AG04449 (cell line): ENCODE measurements at regions of chr4 and their contacts with region 1.

Region 1: GRCh38 chr4:25439918-25440477 is 62.9 kb downstream of the ANAPC4 start:
- DNase-seq: peak; percentile 14
- H3K4me3 ChIP-seq: no peak overlapping the region
- CTCF ChIP-seq: peak; percentile 82

Region 2: GRCh38 chr4:25420931-25421330 is 19.1 kb before region 1 on chr4:
- CTCF ChIA-PET with region 1: interaction called, 37 read pairs
- POLR2A ChIA-PET with region 1: no interaction called
- DNase-seq: no peak
- H3K4me3 ChIP-seq: no peak overlapping the region
- CTCF ChIP-seq: no peak

Region 3: DNA sequence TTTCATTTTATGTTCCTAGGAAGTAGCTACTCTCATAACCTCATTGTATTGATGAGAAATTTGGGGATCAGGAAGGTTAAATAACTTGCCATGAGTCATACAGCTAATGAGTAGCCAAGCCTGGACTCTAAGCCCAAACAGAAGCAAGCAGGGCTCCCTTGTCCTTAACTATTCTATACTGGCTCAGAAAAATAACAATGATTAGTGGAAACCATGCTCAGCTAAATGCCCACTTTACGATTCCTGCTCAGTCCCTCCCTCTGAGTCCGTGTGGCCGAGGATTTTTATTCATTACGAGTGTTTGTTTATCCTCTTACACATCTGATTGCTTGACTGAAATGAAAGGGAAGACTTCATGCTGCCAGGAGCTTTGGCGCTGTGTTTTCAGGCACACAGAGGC is 316.5 kb after region 1 on chr4:
- CTCF ChIA-PET with region 1: interaction called, 464 read pairs
- POLR2A ChIA-PET with region 1: no interaction called
- DNase-seq: no peak
- H3K4me3 ChIP-seq: no peak overlapping the region
- CTCF ChIP-seq: no peak

Region 4: GRCh38 chr4:25779016-25779415 is 339.0 kb after region 1 on chr4:
- CTCF ChIA-PET with region 1: interaction called, 464 read pairs
- POLR2A ChIA-PET with region 1: no interaction called
- DNase-seq: no peak
- H3K4me3 ChIP-seq: no peak overlapping the region
- CTCF ChIP-seq: no peak

Region 5: DNA sequence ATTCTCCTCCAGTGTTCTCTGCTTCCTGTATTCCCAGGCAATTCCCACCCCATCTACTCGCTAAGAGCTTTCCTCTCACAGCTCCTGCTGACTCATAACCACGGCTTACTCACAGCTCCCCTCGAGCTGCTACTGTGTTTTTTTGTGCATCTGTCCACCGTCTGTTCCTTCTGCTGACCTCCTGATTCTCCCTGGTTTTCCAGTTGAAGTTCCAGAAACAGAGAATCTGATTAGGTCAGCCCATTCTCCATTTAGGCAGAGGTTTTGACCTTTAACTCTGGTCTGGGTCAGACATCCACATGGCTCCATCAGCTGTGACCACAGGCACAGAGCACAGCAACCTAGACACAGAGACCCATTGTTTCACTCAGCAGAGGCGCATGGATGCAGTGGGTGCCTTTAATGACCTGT is 468.5 kb after region 1 on chr4:
- CTCF ChIA-PET with region 1: interaction called, 28 read pairs
- POLR2A ChIA-PET with region 1: no interaction called
- DNase-seq: peak; percentile 87
- H3K4me3 ChIP-seq: no peak overlapping the region
- CTCF ChIP-seq: no peak

Region 6: DNA sequence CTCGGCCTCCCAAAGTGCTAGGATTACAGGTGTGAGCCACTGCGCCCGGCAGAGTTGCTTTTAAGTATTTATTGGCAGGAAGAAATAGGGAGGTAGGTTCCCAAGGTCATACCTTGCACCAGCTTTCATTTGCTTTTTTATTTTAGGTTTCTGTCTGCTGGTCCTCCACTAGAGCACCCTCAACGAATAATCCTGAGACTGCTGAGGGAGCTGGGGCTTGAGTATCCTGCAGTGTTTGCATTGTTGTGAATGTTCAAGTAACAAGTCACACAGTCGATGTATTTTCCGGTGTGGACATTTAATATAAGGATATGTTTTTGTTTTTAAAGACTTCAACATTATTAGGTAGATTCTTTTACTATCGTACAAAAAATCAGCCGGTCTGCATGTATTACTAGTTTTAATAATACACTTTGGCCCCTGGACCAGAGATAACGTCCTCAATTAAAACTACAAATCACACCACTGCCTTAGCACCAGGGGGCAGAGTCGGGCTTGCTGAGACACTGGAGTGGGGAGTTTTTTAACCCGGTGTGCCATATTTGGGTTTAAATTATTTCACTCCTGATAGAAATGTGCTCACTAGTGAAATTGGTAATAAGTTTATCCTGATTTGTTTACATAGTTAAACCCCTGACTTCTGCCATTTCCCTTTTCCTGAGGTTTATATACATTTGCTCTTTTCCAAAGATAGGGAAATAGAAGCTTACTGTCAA is 485.6 kb after region 1 on chr4:
- CTCF ChIA-PET with region 1: interaction called, 13 read pairs
- POLR2A ChIA-PET with region 1: no interaction called
- DNase-seq: no peak
- H3K4me3 ChIP-seq: no peak overlapping the region
- CTCF ChIP-seq: peak; percentile 57